Activated CD8-positive, alpha-beta T cell treated with anti-CD3 and anti-CD28 coated beads, Interleukin-2, amount 10 ng/mL, durations not matched to agents 7 days and 5 days (primary cell): ENCODE measurements at regions of chr1 and their contacts with region 1.

Region 1: GRCh38 chr1:71049951-71050598 is 2.5 kb upstream of the PTGER3 start:
- DNase-seq: peak; percentile 48
- ATAC-seq: no peak
- H3K4me3 Mint-ChIP-seq: no peak overlapping the region
- H3K27ac Mint-ChIP-seq: no peak overlapping the region
- H3K4me1 Mint-ChIP-seq: peaks cover 21% of the 10 kb centered on the region
- H3K27me3 Mint-ChIP-seq: peaks cover 39% of the 10 kb centered on the region

Region 2: DNA sequence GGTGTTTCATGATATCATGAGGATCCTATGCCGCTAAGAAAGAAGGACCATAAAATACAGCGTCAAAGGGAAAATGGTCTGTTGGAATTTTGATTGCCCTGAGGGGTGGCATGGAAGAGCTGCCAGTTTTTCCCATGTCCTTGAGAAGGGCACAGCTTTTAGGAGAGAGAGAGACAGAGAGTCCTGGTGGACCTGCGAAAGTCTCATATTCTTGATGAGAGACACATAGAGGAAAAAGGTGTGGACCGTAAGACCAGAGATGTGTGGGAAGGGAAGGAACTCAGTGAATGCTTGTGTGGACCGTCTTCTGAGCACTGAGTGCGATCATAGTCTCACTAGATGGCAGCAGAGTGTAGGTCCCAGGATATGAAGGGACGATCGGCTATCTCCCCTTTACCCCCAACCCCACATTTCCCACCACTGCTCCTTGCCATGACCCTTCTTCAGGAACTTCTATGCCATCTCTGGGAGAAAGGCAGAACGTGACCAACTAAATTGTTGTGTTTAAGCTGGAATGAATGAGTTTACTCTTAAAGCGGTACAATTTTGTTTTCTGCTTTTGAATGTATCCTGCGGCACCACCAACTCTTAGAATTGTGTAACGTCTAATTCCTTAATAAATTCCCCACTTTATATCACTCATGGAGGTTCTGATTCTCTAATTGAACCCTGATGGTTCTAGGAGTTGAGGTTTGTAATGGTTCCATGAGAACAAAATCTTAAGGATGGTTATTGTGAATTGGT is 521.3 kb before region 1 on chr1:
- CTCF ChIA-PET with region 1: interaction called, 10 read pairs
- POLR2A ChIA-PET with region 1: no interaction called
- DNase-seq: peak; percentile 29
- ATAC-seq: no peak
- H3K4me3 Mint-ChIP-seq: no peak overlapping the region
- H3K27ac Mint-ChIP-seq: no peak overlapping the region
- H3K4me1 Mint-ChIP-seq: no peaks in the 10 kb centered on the region
- H3K27me3 Mint-ChIP-seq: peaks cover 31% of the 10 kb centered on the region

Region 3: DNA sequence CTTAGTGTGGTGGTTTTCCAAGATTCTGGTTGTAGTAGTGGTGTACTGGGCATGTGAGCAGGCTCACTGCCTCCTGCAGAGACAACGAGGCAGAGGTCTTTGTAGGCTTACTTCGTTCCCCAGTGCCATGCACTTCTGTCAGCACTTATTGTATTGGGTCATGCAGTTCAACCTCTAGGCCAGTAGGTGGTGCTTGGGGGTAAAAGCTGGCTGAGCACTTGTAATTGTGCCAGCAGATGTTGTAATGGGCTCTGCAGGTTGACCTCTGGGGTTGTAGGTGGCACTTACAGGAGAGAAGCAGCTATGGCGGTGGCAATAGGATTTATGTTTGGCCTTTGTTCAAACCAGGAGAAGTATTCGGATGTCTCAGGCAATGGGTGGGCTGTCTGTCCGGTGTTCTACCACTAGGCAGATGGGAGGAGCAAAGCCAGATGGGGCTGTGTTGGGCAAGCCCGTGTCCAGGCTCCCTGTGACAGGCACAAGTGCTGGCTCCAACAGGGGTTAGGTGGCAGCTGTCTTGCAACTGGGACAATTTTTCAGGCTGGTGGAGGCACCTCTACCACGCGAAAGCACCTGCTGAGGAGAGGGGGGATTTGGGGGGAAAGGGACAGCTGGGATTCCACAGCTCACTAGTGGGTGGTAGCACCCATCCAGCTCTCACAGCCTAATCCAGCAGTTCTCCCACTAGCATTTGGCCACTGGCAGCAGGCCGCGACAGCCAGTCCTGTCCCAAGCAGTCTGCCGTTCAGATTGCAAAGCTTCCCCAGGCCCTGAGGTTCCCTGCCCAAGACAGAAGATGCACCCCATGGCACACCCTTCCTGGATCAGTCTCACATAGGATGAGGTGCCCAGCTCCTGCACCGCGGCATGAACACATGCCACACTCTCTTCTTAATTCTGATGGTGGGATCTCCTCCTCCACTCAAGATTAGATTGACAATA is 364.5 kb before region 1 on chr1:
- CTCF ChIA-PET with region 1: interaction called, 10 read pairs
- POLR2A ChIA-PET with region 1: no interaction called
- DNase-seq: peak; percentile 67
- ATAC-seq: peak; percentile 86
- H3K4me3 Mint-ChIP-seq: no peak overlapping the region
- H3K27ac Mint-ChIP-seq: no peak overlapping the region
- H3K4me1 Mint-ChIP-seq: no peaks in the 10 kb centered on the region
- H3K27me3 Mint-ChIP-seq: peaks cover 7% of the 10 kb centered on the region

Region 4: DNA sequence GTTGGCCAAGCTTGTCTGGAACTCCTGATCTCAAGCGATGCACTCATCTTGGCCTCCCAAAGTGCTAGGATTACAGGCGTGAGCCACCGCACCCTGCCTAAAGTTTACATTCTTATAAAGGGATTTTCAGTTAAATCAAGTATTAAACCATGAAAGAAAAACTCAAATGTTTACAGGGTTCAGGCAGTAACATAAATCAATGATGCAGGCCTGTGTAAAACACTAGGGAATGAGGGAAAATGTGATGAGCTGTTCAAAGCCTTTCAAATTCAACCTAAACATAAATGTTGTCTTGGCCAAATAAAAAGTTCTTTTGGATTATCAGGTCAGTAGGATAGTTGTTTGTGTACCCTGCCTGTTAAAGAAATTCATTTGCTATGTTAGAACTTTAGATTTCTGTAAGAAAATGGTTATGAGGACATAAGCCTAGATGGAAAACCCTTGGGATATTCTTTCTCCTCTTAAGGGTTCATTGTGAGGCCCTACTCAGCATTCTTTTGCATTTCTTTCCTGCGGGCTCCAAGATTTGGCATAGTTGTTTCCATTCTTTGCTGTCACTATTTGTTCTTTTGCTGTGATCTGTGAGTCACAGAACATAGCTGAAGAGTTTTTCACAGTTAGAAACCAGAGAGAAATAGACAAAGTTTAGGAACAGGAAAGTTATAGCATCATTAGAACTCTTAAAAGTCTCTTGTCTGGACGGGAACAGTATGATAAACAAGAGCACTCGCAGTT is 39.6 kb after region 1 on chr1:
- CTCF ChIA-PET with region 1: no interaction called
- POLR2A ChIA-PET with region 1: no interaction called
- DNase-seq: no peak
- ATAC-seq: no peak
- H3K4me3 Mint-ChIP-seq: no peak overlapping the region
- H3K27ac Mint-ChIP-seq: no peak overlapping the region
- H3K4me1 Mint-ChIP-seq: no peaks in the 10 kb centered on the region
- H3K27me3 Mint-ChIP-seq: peaks cover 2% of the 10 kb centered on the region

Region 5: DNA sequence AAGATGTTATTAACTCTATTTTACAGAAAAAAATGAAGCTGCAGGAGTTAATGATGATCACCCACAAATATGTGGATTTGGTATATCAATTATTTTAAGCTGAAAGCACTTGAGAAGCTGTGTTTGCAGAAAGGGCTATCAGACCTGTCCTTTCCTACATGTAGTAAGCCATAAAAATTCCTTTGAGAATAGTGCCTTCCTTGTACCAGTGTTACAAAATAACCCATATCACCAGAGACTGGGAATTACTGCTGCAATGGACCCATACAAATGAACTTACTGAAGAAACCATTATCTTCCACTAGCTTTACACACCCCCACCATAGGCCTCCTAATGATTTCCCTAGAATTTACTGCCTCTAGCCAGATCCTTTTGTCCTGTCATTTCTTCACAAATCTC is 129.9 kb after region 1 on chr1:
- CTCF ChIA-PET with region 1: no interaction called
- POLR2A ChIA-PET with region 1: no interaction called
- DNase-seq: no peak
- ATAC-seq: no peak
- H3K4me3 Mint-ChIP-seq: no peak overlapping the region
- H3K27ac Mint-ChIP-seq: no peak overlapping the region
- H3K4me1 Mint-ChIP-seq: no peaks in the 10 kb centered on the region
- H3K27me3 Mint-ChIP-seq: no peaks in the 10 kb centered on the region